Esophagus squamous epithelium (tissue), 5 donors: ENCODE measurements at regions of chr1 and their contacts with region 1.

Region 1: DNA sequence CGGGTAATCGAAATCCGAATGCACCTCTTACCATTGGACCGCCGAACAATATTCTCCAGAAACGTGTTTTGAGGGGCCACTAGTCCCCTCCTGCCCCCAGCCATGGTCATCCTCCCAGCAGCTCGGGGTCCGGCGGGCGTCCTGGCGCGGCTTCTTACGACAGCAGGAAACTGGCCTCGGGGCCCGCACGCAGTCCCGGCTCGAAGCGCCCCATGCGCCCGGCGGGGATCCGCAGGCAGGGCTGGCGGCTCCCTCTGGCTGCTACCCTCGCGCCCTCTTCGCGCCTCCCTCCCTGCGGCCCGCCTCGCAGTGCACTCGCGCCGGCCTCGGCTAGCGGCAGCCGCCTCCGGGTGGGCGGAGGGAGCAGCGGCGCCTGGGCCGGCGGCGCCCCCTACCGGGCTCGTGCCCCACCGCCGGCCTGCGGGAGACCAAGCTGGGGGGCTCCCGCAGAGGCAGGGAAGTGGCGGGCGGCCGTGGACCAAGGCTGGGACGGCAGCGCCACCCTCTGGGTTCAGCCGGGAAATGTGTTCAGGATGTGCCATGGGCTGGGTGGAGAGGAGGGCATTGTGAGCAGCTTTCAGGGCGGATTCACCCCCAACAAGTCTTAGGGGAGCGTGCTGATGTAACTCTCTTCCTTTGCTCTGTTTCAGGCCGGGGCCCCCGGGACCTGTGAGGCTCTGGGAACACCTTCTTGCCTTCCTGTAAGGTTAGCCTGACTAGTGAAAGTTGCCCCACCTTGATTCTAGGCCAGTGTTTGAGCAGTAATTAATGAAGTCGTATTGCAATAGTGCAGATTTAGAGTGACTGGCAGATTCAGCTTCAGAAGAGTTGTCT is at the start of gene KCNH1:
- DNase-seq: no peak
- H3K4me3 ChIP-seq: peak within 1 kb of the TSS; percentile 34 to 69 (median 46)
- H3K27ac ChIP-seq: peak within 1 kb of the TSS in 2 of 4 donors; percentile 5 to 33
- H3K4me1 ChIP-seq: peaks cover 10 to 20% (median 12%) of the 10 kb centered on the region in 3 donors
- H3K27me3 ChIP-seq: peaks cover 0 to 60% (median 2%) of the 10 kb centered on the region in 4 donors
- CTCF ChIP-seq: peak; percentile 77 to 97 (median 86)
- POLR2A ChIP-seq: no peak
- total RNA-seq, gene KCNH1: 0.57 to 1.0 (median 0.83) TPM in 3 of 4 donors, not detected in the other

Region 2: DNA sequence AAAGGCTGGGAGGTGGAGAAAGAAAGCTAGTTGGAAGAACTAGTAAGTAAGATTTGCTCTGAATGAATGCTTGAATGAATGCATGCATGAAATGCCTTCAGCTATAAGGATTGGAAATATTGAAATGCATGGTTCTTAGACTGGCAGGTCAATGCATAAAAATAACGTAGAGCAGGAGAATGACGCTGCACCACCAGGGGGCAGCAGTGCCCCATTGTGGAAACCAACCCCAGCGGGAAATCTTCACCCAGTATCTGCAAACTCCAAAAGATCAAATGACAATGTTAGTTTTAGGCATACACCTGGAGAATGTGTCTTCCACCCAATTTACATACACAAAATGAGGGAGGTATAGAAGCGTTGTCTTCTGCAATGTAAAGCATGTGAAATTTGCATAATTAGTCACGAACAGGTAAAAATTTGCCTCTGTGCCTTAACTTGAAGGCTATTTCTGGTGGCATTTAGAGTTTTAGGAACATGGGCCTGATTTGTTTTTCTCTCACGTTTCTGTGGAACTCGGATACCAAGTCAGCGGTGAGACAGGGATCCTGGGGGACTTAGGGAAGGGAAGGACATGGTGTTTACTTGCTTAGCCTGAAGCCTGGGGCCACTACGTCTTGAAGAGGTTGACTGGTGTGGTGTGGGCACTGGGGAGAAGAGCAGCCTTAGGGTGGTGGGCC is 726.7 kb before region 1 on chr1:
- intact Hi-C with region 1: loop called (anchors 5 kb)
- DNase-seq: no peak
- H3K4me3 ChIP-seq: no peak overlapping the region
- H3K27ac ChIP-seq: no peak overlapping the region
- H3K4me1 ChIP-seq: peaks cover 0 to 26% (median 4%) of the 10 kb centered on the region in 3 donors
- H3K27me3 ChIP-seq: no peaks in the 10 kb centered on the region
- CTCF ChIP-seq: peak; percentile 81 to 97 (median 89)
- POLR2A ChIP-seq: no peak

Region 3: DNA sequence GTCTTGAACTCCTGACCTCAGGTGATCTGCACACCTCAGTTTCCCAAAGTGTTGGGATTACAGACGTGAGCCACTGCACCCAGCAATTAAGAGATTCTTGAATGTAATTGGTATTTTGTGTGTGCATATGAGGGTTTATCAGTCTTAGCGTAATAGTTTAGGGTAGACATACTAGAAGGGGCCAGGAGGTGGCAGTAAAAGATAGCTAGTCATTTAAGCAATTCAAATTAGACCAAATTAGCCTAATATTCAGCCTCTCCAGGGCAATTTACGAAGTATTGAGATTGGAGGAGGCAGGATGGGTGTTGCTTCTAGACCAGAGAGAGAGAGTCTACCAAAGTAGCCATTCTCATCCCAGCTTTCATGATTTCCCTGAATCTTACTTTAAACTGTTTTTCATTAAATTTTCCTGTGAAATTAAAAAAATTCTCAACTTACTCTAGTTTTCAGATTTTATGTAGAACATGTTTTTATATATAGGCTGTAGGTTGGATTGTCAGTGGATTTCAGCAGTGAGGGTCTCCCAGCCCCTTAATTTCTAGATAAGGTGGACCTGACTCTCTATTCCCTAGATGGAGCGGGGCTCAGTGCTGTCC is 685.7 kb before region 1 on chr1:
- intact Hi-C with region 1: loop called (anchors 10 kb)
- DNase-seq: no peak
- H3K4me3 ChIP-seq: no peak overlapping the region
- H3K27ac ChIP-seq: no peak overlapping the region
- H3K4me1 ChIP-seq: no peaks in the 10 kb centered on the region
- H3K27me3 ChIP-seq: no peaks in the 10 kb centered on the region
- CTCF ChIP-seq: peak in 5 of 6 experiments; percentile 35 to 78 (median 47)
- POLR2A ChIP-seq: no peak

Region 4: GRCh38 chr1:210582205-210582970 is 551.7 kb before region 1 on chr1:
- intact Hi-C with region 1: loop called (anchors 2 kb)
- DNase-seq: no peak
- H3K4me3 ChIP-seq: no peak overlapping the region
- H3K27ac ChIP-seq: no peak overlapping the region
- H3K4me1 ChIP-seq: no peaks in the 10 kb centered on the region
- H3K27me3 ChIP-seq: no peaks in the 10 kb centered on the region
- CTCF ChIP-seq: no peak
- POLR2A ChIP-seq: no peak